ENCODE measurements at regions of chr15 and their contacts with region 1.

Region 1: GRCh38 chr15:66603301-66604179 is 37.7 kb upstream of the LCTL start:
- DNase-seq: peak in 1 of 2 donors; percentile 23
- H3K4me3 ChIP-seq: no peak overlapping the region
- H3K27ac ChIP-seq: no peak overlapping the region
- H3K4me1 ChIP-seq: no peaks in the 10 kb centered on the region
- H3K27me3 ChIP-seq: no peaks in the 10 kb centered on the region
- CTCF ChIP-seq: peak; percentile 57 to 64 (median 62)
- POLR2A ChIP-seq: no peak

Region 2: GRCh38 chr15:65712415-65712814 is 891.1 kb before region 1 on chr15:
- intact Hi-C with region 1: no loop called
- DNase-seq: no peak
- H3K4me3 ChIP-seq: no peak overlapping the region
- H3K27ac ChIP-seq: no peak overlapping the region
- H3K4me1 ChIP-seq: no peaks in the 10 kb centered on the region
- H3K27me3 ChIP-seq: no peaks in the 10 kb centered on the region
- CTCF ChIP-seq: no peak
- POLR2A ChIP-seq: no peak

Region 3: GRCh38 chr15:66580643-66581042 is 22.9 kb before region 1 on chr15:
- intact Hi-C with region 1: loop called (anchors 1 kb)
- DNase-seq: no peak
- H3K4me3 ChIP-seq: no peak overlapping the region
- H3K27ac ChIP-seq: no peak overlapping the region
- H3K4me1 ChIP-seq: no peaks in the 10 kb centered on the region
- H3K27me3 ChIP-seq: no peaks in the 10 kb centered on the region
- CTCF ChIP-seq: no peak
- POLR2A ChIP-seq: no peak

Region 4: GRCh38 chr15:66851226-66852071 is 247.9 kb after region 1 on chr15:
- intact Hi-C with region 1: loop called (anchors 10 kb)
- DNase-seq: peak; percentile 70 to 86
- H3K4me3 ChIP-seq: peak overlapping the region in 1 of 3 donors; percentile 36
- H3K27ac ChIP-seq: peak overlapping the region; percentile 6 to 44
- H3K4me1 ChIP-seq: no peaks in the 10 kb centered on the region
- H3K27me3 ChIP-seq: no peaks in the 10 kb centered on the region
- CTCF ChIP-seq: peak; percentile 90 to 95 (median 93)
- POLR2A ChIP-seq: no peak